ENCODE measurements at regions of chr1 and their contacts with region 1.

Region 1: DNA sequence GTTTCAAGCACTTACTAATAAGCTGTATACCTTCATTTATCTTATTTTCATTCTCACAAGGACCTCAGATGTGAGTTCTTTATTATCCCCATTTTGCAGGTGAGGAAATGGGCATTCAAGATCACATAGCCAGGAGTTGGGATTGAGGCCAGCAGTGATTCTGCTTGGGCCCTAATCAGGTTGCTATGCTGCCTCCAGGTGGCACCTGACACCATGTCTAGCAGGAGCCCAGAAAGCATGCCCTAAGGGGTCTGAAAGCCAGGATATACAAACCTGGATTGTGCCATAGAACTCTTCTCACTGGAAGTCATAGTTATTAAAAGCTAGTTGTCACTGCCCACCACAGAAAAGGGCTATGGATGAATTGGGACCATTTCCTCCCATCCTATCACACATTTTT is 61.1 kb downstream of the FYB2 start:
- DNase-seq: peak; percentile 19
- H3K4me3 ChIP-seq: no peak overlapping the region
- H3K27ac ChIP-seq: no peak overlapping the region
- H3K4me1 ChIP-seq: no peaks in the 10 kb centered on the region
- H3K27me3 ChIP-seq: no peaks in the 10 kb centered on the region
- CTCF ChIP-seq: peak; percentile 53

Region 2: DNA sequence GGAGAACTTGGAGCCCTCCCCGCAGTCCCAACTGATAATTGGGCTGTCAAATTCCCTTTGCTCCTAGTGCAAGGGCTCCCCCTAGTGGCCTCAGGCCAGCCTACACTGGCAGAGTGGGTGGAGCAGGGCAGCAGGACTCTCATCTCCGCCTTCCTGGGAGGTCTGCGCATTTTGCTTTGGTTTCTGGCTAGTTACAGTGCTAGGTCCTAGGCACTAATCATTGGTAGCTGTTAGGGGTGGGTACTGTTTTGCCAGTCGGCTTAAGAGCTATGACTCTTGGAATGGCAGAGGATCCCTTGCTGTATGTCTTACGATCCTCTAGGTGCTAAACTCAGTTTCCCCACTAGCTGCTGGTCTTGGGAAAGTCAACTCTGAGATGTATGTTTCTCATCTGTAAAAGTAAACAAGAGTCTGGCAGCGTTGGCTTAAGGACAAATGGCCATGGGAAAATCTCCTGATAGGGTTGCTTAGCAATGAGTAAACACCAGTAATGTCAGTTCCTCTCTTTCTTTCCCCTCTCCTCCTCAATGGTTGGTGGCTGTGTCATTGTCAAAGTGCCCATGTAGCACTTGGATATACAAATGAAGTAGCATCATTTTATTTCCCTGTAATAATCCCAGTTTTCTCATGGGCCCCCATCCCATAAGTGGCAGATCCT is 63.1 kb after region 1 on chr1:
- intact Hi-C with region 1: loop called (anchors 5 kb)
- DNase-seq: peak; percentile 74
- H3K4me3 ChIP-seq: no peak overlapping the region
- H3K27ac ChIP-seq: no peak overlapping the region
- H3K4me1 ChIP-seq: peaks cover 23% of the 10 kb centered on the region
- H3K27me3 ChIP-seq: no peaks in the 10 kb centered on the region
- CTCF ChIP-seq: peak; percentile 95

Measured in left ventricle myocardium inferior (tissue), 1 donor.